ENCODE measurements at regions of chr10 and their contacts with region 1.

Region 1: GRCh38 chr10:88851706-88852105 is at the start of gene ANKRD22:
- DNase-seq: no peak
- ATAC-seq: no peak
- H3K4me3 Mint-ChIP-seq: no peak within 1 kb of the TSS
- H3K27ac Mint-ChIP-seq: no peak within 1 kb of the TSS
- H3K4me1 Mint-ChIP-seq: peaks cover 18% of the 10 kb centered on the region
- H3K27me3 Mint-ChIP-seq: peaks cover 9% of the 10 kb centered on the region
- total RNA-seq, gene ANKRD22: 0.37 TPM

Region 2: DNA sequence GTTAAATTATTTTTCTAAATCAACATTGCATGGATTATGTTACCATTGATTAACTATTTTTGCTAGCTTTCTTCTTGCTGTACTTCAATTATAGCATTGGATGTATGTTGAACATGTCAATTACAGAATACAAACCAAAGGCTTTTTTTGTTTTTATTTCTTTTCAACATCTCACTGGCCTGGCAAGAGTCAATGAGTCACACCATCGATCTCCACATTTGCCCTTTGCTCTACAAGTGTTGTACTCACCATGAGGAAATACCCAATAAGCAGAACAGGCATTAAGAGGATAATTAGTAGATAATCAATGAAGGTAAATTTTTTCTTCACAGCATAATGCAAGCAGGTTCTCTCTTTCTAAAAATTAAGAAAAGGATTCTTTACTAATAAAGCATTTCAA is 23.4 kb before region 1 on chr10:
- CTCF ChIA-PET with region 1: interaction called, 4 read pairs
- POLR2A ChIA-PET with region 1: no interaction called
- intact Hi-C with region 1: loop called in 1 of 2 experiments (anchors 2 kb)
- DNase-seq: no peak
- ATAC-seq: no peak
- H3K4me3 Mint-ChIP-seq: no peak overlapping the region
- H3K27ac Mint-ChIP-seq: no peak overlapping the region
- H3K4me1 Mint-ChIP-seq: peaks cover 64% of the 10 kb centered on the region
- H3K27me3 Mint-ChIP-seq: no peaks in the 10 kb centered on the region

Region 3: GRCh38 chr10:88880282-88881076 is 28.8 kb after region 1 on chr10:
- CTCF ChIA-PET with region 1: interaction called, 4 read pairs
- POLR2A ChIA-PET with region 1: no interaction called
- intact Hi-C with region 1: loop called (anchors 1 to 2 kb)
- DNase-seq: peak; percentile 87
- ATAC-seq: peak; percentile 81
- H3K4me3 Mint-ChIP-seq: peak overlapping the region; percentile 97
- H3K27ac Mint-ChIP-seq: peak overlapping the region; percentile 98
- H3K4me1 Mint-ChIP-seq: peaks cover 65% of the 10 kb centered on the region
- H3K27me3 Mint-ChIP-seq: no peaks in the 10 kb centered on the region